Aorta (tissue), 5 donors: ENCODE measurements at regions of chr14 and their contacts with region 1.

Region 1: GRCh38 chr14:22314181-22314820 is 274.7 kb downstream of the DAD1 start:
- DNase-seq: no peak
- ATAC-seq: peak; percentile 86
- H3K4me3 ChIP-seq: no peak overlapping the region
- H3K27ac ChIP-seq: no peak overlapping the region
- H3K4me1 ChIP-seq: no peaks in the 10 kb centered on the region
- H3K27me3 ChIP-seq: no peaks in the 10 kb centered on the region

Region 2: DNA sequence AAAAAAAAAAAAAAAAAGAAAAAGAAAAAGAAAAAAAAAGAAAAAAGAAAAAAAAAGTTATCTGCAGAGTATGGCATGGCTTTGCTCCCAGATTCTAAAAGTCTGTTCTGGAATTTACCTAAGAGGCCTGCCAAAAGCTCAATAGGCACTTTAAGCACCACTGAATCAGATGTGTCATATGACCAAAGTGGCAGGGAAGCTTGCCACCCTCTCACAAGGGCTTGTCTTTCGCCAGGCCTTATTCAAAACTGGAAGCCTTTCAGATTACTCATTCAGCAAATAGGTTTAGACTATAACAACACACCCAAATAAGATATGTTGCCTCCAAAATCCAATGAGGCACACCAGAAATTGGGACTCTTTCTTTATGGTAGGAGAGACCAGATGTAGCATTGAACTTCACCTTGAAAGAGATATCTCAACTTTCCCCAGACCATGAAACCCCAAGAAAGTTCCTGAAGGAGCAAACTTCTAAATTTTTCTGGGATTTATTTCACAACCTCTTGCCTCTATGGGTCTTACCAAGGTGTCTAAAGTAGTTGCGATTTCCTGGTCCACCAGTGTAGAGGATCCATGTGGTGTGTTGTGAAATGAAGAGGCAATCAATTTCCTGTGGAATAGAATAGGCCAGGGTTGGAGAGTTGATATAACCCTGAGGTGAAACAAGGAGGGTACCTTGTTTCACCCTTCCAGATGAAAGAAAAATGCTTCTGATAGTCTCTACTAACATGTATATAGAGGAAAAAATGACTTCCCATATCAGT is 56.0 kb after region 1 on chr14:
- intact Hi-C with region 1: loop called (anchors 2 to 5 kb)
- DNase-seq: peak; percentile 79 to 81
- ATAC-seq: peak; percentile 78
- H3K4me3 ChIP-seq: no peak overlapping the region
- H3K27ac ChIP-seq: peak overlapping the region; percentile 22 to 86
- H3K4me1 ChIP-seq: peaks cover 0 to 4% of the 10 kb centered on the region in 2 donors
- H3K27me3 ChIP-seq: no peaks in the 10 kb centered on the region

Region 3: DNA sequence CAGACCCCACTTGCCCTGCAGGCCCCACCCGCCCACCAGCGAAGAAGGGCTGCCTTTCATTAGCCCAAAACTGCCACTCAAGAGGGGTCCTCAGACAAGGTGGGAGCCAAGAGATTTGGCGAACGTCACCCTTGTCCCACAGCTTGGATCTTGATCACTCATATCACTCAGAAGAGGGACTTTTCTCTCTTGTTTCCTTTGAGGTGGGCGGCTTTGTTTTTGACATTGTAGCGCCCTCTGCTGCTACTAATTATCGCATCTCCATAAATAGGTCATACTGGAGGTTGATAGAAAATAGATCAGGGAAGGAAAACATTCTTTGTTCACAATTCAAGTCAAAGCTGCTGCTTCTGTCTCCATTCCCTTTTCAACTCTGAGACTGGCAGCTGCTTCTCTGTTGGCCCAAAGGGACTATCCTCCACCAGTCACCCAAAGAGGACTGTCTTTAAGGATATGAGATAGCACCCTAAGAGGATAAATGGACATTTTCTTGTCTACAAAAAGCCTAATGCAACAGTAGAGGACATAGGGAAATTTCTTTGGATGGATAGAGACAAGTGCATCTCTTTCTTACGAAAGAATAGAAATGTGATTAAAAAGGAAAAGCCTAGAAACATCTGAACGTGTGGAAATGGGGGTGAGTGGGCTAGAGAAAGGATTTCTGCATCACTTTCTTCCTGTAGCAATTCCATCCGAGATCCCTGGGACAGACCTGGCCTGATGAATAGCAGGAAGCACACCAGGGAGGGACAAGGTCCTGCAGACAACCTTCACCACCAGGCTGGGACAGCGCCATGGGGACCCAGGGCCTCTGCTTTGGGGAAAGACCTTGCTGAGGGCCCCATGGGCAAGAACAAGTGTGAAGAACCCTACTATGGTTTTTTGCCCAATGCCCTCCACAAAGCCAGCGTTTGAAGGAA is 158.9 kb after region 1 on chr14:
- intact Hi-C with region 1: loop called in 1 of 2 experiments (anchors 10 kb)
- DNase-seq: no peak
- ATAC-seq: no peak
- H3K4me3 ChIP-seq: no peak overlapping the region
- H3K27ac ChIP-seq: no peak overlapping the region
- H3K4me1 ChIP-seq: peaks cover 0 to 3% of the 10 kb centered on the region in 2 donors
- H3K27me3 ChIP-seq: peaks cover 0 to 2% of the 10 kb centered on the region in 2 donors

Region 4: GRCh38 chr14:22531451-22532344 is 217.4 kb after region 1 on chr14:
- intact Hi-C with region 1: loop called in 1 of 2 experiments (anchors 5 kb)
- DNase-seq: no peak
- ATAC-seq: no peak
- H3K4me3 ChIP-seq: no peak overlapping the region
- H3K27ac ChIP-seq: peak overlapping the region in 1 of 2 donors; percentile 38
- H3K4me1 ChIP-seq: peaks cover 0 to 6% of the 10 kb centered on the region in 2 donors
- H3K27me3 ChIP-seq: no peaks in the 10 kb centered on the region